ENCODE measurements at regions of chr13 and their contacts with region 1.

Region 1: GRCh38 chr13:65057986-65058385 is 2172.2 kb downstream of the PCDH9 start:
- DNase-seq: no peak
- ATAC-seq: no peak

Region 2: DNA sequence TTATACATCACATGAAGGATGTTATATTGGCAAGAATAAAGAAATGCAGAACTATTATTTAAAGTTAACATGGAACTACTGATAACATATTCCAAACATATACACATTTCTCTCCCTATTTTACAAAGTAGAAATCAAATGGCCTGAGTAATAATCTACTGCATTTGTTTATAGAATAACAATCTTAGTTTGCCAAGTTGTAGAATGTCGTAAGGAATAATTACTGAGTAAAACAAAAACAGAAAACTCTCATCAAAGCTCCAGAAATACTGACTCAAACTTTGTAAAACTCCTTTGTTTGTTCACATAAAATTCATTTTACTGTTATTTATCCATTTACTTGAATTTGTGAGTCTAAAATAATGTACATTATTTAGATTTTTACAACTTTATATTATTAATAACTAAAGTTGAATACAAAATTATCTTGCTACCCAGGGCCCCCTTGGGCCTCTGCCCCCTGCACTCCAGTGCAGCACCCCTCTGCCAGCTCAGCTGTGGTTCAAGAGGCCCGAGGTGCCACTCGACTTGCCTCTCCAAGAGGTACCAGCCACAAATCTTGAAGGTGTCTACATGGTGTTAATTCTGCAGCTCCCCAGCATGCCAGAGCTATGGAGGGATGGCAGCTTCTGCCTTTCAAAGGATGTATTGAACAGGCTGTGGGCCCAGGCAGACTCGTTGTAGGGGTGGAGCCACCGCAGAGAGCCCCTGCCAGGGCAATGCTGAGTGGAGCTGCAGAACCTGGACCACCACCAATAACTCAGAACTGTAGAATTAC is 647.5 kb before region 1 on chr13:
- intact Hi-C with region 1: no loop called
- DNase-seq: no peak
- ATAC-seq: no peak

Region 3: GRCh38 chr13:65011378-65011777 is 46.6 kb before region 1 on chr13:
- intact Hi-C with region 1: loop called (anchors 2 kb)
- DNase-seq: no peak
- ATAC-seq: no peak